GM10248 (cell line): ENCODE measurements at regions of chr3 and their contacts with region 1.

Region 1: DNA sequence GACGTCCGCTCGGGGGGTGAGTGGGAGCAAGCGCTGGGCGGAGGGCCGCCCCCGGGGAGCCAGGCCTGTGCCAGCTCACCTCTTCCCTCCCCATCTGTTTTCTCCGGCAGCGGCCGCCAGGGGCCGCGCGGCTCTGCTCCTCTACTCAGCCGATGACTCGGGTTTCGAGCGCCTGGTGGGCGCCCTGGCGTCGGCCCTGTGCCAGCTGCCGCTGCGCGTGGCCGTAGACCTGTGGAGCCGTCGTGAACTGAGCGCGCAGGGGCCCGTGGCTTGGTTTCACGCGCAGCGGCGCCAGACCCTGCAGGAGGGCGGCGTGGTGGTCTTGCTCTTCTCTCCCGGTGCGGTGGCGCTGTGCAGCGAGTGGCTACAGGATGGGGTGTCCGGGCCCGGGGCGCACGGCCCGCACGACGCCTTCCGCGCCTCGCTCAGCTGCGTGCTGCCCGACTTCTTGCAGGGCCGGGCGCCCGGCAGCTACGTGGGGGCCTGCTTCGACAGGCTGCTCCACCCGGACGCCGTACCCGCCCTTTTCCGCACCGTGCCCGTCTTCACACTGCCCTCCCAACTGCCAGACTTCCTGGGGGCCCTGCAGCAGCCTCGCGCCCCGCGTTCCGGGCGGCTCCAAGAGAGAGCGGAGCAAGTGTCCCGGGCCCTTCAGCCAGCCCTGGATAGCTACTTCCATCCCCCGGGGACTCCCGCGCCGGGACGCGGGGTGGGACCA is 632 bp upstream of the CRELD1 start:
- DNase-seq: peak; percentile 88
- CTCF ChIP-seq: peak; percentile 83

Region 2: DNA sequence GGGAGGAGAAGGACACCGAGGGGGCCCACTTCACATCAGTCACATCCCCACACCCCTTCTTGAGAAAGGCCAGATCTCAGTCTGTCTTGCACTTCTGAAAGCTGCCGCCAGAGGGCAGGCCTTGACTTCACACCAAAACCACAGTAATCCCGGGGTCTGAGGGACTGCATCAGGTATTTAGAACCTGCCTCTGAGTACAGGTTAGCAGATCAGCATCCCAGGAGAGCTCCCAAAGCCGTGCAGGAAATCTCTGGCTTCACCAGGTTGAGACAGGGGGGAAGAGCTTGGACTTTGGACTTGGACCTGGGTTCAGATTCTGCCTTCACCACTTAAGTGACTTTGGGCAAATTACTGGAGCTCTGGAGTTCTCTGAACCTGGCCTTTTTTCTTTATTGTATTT is 429.7 kb before region 1 on chr3:
- CTCF ChIA-PET with region 1: interaction called, 22 read pairs
- POLR2A ChIA-PET with region 1: no interaction called
- DNase-seq: peak; percentile 78
- CTCF ChIP-seq: peak; percentile 90

Region 3: DNA sequence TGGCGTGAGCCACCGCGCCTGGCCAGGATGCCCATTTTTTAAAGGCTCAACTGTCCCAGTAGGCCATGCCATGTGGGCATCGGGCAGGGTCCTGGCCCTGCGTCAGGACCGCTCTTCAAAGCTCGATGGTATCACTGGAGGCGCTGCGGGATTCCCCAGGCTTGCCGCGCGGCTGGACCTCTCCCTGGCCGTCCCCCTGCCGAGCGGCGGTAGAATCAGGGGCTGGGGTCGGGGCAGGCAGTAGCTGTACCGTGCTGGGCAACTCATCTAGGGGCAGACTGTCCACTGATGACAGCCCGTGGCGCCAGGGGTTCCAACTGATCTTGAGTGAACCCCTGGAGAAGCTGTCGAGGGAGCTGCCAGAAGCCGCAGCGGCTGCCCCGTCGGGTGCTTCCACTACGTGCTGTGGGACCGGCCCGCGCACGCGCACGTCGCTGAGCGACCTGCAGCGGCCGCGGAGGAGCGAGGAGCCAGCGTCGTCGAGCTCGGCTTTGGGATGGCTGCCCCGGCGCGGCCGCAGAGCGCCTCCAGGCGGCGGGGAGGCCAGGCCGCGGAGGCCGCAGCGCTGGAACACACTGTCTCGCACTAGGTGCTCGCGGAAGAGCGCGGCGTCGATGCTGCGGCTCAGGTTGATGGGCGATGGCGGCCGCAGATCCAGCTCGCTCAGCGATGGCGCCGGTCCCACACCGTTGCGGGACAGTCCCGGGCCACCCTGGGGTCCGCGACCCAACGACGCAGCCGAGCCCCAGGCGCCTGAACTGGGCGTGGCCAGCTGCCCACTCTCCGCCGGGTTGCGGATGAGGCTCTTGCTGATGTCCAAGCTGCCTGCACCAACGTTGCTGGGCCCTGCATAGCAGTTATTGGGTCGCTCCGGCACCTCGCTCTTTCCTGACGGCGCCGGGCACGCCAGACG is 13.4 kb after region 1 on chr3:
- CTCF ChIA-PET with region 1: interaction called, 33 read pairs
- POLR2A ChIA-PET with region 1: interaction called, 10 read pairs
- DNase-seq: peak; percentile 67
- CTCF ChIP-seq: no peak

Region 4: GRCh38 chr3:9976721-9977709 is 44.0 kb after region 1 on chr3:
- CTCF ChIA-PET with region 1: interaction called, 10 read pairs
- POLR2A ChIA-PET with region 1: no interaction called
- DNase-seq: no peak
- CTCF ChIP-seq: no peak

Region 5: DNA sequence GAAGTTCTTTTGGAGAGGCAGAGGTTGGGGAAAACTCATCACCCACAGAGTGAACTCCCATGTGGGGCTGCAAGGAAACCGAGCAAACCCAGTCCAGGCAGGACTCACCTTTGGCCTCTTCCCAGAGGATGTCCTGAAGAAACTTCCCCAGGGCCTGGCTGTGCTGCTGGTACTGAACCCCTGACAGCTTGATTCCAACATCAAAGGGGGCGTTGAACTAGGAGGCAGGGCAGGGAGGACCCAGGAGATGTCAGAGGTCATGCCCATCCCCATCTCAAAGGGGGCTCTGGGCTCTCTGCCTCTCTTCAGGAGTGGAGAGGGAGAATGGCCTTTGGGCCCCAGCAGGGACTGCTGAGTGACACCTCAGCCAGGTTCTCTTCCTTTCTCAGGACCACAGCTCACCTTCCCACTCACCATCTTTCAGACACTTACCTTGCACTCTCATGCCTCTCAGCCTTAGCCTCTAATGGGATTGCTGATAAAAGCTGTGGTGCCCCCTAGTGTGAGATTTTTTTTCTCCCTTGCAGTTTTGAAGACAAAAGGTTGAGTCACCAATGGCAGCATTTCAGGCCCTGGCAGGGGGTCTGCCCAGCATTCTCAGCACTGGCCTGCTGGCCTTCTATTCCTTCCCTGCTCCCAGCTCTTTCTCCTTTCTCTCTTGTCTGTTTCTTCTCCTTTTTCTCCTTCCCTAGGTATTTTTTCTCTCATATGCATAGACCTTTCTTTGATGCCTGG is 353.8 kb after region 1 on chr3:
- CTCF ChIA-PET with region 1: interaction called, 12 read pairs
- POLR2A ChIA-PET with region 1: no interaction called
- DNase-seq: peak; percentile 50
- CTCF ChIP-seq: peak; percentile 28

Region 6: DNA sequence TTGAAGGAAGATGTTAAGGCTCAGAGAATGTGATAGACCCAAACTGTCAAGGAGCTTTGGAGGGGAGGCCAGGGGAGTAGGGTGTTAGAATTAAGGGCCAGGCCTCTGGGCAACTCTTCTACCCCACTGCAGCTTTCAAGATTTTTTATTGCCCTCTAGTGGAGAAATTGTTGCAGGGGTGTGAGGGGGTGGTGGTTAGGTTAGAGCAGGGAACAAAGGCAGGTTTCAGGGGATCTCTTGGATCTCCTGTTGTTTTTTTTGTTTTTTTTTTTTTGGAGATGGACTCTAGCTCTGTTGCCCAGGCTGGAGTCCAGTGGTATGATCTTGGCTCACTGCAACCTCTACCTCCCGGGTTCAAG is 389.3 kb after region 1 on chr3:
- CTCF ChIA-PET with region 1: interaction called, 42 read pairs
- POLR2A ChIA-PET with region 1: interaction called, 4 read pairs
- DNase-seq: peak; percentile 62
- CTCF ChIP-seq: peak; percentile 54